ENCODE measurements at regions of chr7 and their contacts with region 1.

Region 1: GRCh38 chr7:37930226-37930948 is 9.9 kb downstream of the EPDR1 start:
- DNase-seq: no peak
- ATAC-seq: no peak; the same call in 2 of the 3 replicates
- H3K4me3 ChIP-seq: no peak overlapping the region
- H3K27ac ChIP-seq: no peak overlapping the region
- H3K4me1 ChIP-seq: no peaks in the 10 kb centered on the region
- H3K27me3 ChIP-seq: no peaks in the 10 kb centered on the region
- CTCF ChIP-seq: no peak
- EP300 ChIP-seq: no peak
- POLR2A ChIP-seq: no peak
- RAD21 ChIP-seq: no peak

Region 2: GRCh38 chr7:37786741-37787569 is 143.4 kb before region 1 on chr7:
- CTCF ChIA-PET with region 1: no interaction called
- POLR2A ChIA-PET with region 1: no interaction called
- RAD21 ChIA-PET with region 1: no interaction called
- SMC1A ChIA-PET with region 1: no interaction called
- in situ Hi-C with region 1: no loop called
- intact Hi-C with region 1: no loop called
- DNase-seq: peak; percentile 91
- ATAC-seq: peak; percentile 92
- H3K4me3 ChIP-seq: peak overlapping the region; percentile 25; the same call in 1 of the 2 replicates
- H3K27ac ChIP-seq: peak overlapping the region; percentile 86
- H3K4me1 ChIP-seq: peaks cover 50% of the 10 kb centered on the region
- H3K27me3 ChIP-seq: no peaks in the 10 kb centered on the region
- CTCF ChIP-seq: no peak
- EP300 ChIP-seq: peak; percentile 83 to 89; a peak in 3 of 4 replicates
- POLR2A ChIP-seq: no peak
- RAD21 ChIP-seq: no peak

Region 3: GRCh38 chr7:37882086-37882485 is 48.3 kb before region 1 on chr7:
- CTCF ChIA-PET with region 1: no interaction called
- POLR2A ChIA-PET with region 1: no interaction called
- RAD21 ChIA-PET with region 1: no interaction called
- SMC1A ChIA-PET with region 1: no interaction called
- in situ Hi-C with region 1: no loop called
- intact Hi-C with region 1: no loop called
- DNase-seq: no peak
- ATAC-seq: no peak
- H3K4me3 ChIP-seq: no peak overlapping the region
- H3K27ac ChIP-seq: no peak overlapping the region
- H3K4me1 ChIP-seq: no peaks in the 10 kb centered on the region
- H3K27me3 ChIP-seq: no peaks in the 10 kb centered on the region
- CTCF ChIP-seq: no peak
- EP300 ChIP-seq: no peak
- POLR2A ChIP-seq: no peak
- RAD21 ChIP-seq: no peak

Region 4: DNA sequence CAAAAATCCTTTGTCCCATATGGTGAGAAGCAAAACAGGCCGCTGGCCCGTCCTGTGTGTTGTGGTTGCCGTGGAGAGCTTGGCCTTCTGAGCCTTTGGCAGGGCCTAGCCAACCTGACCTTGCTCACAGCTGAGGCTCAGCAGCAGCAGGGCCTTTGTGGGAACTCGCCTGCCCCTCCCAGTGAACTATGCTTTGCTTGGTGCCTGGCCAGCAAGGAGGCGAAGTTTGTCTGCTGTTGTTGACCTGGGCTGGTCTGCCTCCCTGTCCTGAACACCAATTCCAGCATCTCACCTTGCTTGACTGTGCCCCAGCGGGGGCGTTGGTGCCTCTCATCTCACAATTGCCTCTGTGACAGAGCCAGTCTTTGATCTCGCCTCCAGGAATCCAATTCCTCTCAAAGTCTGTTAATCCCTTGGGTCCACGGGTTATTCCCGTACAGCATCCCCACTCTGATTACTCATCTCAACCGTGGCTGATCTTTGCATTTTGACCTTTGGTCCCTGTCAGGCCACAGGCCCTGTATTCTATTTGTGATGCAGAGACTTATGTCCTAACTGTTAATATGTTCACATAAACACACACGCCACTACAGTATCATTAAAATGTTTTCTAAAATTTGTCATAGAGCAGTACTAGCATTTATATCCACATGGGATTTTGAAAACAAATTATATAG is 12.7 kb after region 1 on chr7:
- CTCF ChIA-PET with region 1: interaction called, 5 read pairs
- POLR2A ChIA-PET with region 1: interaction called, 4 read pairs
- RAD21 ChIA-PET with region 1: interaction called, 7 read pairs
- SMC1A ChIA-PET with region 1: interaction called, 11 read pairs
- in situ Hi-C with region 1: no loop called
- intact Hi-C with region 1: no loop called
- DNase-seq: peak; percentile 33
- ATAC-seq: peak; percentile 67
- H3K4me3 ChIP-seq: no peak overlapping the region
- H3K27ac ChIP-seq: no peak overlapping the region
- H3K4me1 ChIP-seq: peaks cover 3% of the 10 kb centered on the region; the same call in 1 of the 2 replicates
- H3K27me3 ChIP-seq: no peaks in the 10 kb centered on the region
- CTCF ChIP-seq: no peak
- EP300 ChIP-seq: no peak
- POLR2A ChIP-seq: no peak
- RAD21 ChIP-seq: no peak